BJ (cell line): ENCODE measurements at regions of chr5 and their contacts with region 1.

Region 1: GRCh38 chr5:90783460-90784333 is 225.1 kb downstream of the ADGRV1 start:
- DNase-seq: peak; percentile 4
- H3K4me3 ChIP-seq: no peak overlapping the region
- H3K27me3 ChIP-seq: no peaks in the 10 kb centered on the region
- CTCF ChIP-seq: peak; percentile 91

Region 2: GRCh38 chr5:90709323-90710155 is 74.2 kb before region 1 on chr5:
- CTCF ChIA-PET with region 1: interaction called, 11 read pairs
- POLR2A ChIA-PET with region 1: no interaction called
- DNase-seq: no peak
- H3K4me3 ChIP-seq: no peak overlapping the region
- H3K27me3 ChIP-seq: no peaks in the 10 kb centered on the region
- CTCF ChIP-seq: peak; percentile 81